Naive thymus-derived CD8-positive, alpha-beta T cell (primary cell): ENCODE measurements at regions of chr18 and their contacts with region 1.

Region 1: GRCh38 chr18:75216212-75216910 is 5.8 kb downstream of the TSHZ1 start:
- DNase-seq: peak in 5 of 10 donors; percentile 32 to 73 (median 61)
- ATAC-seq: peak; percentile 57 to 79
- H3K4me3 Mint-ChIP-seq: peak overlapping the region; percentile 44 to 72 (median 66)
- H3K27ac Mint-ChIP-seq: peak overlapping the region; percentile 74 to 98 (median 94)
- H3K4me1 Mint-ChIP-seq: peaks cover 46 to 89% (median 84%) of the 10 kb centered on the region in 4 donors
- H3K27me3 Mint-ChIP-seq: no peaks in the 10 kb centered on the region

Region 2: GRCh38 chr18:75074196-75075015 is 142.0 kb before region 1 on chr18:
- POLR2A ChIA-PET with region 1: no interaction called
- DNase-seq: peak in 1 of 10 donors; percentile 48
- ATAC-seq: no peak
- H3K4me3 Mint-ChIP-seq: peak overlapping the region in 4 of 10 donors; percentile 16 to 42 (median 31)
- H3K27ac Mint-ChIP-seq: peak overlapping the region in 7 of 10 donors; percentile 7 to 58 (median 47)
- H3K4me1 Mint-ChIP-seq: peaks cover 21 to 31% (median 30%) of the 10 kb centered on the region in 4 donors
- H3K27me3 Mint-ChIP-seq: no peaks in the 10 kb centered on the region

Region 3: DNA sequence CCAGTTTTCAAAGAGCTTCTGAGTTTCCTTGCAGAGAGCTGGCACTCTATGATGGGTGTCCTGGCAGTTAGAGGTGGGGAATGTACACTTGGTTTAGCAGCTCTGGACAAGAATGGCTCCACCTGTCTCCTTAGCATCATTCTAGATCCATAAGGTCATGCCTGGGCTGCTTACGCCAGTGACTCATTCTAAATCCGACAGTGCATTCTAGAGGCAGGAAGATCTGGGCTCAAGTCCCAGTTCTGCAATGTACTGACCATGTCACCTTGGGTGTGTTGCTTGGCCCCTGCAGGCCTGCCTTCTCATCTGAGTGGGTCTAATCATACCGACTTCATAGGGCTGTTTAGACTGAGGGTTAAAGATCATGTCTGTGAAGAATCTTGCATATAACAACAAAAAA is 53.9 kb before region 1 on chr18:
- POLR2A ChIA-PET with region 1: no interaction called
- DNase-seq: peak in 1 of 10 donors; percentile 16
- ATAC-seq: no peak
- H3K4me3 Mint-ChIP-seq: peak overlapping the region in 8 of 10 donors; percentile 35 to 94 (median 70)
- H3K27ac Mint-ChIP-seq: peak overlapping the region in 4 of 10 donors; percentile 26 to 95 (median 64)
- H3K4me1 Mint-ChIP-seq: peaks cover 4 to 16% (median 14%) of the 10 kb centered on the region in 4 donors
- H3K27me3 Mint-ChIP-seq: peaks cover 0 to 9% (median 1%) of the 10 kb centered on the region in 5 donors

Region 4: GRCh38 chr18:75247611-75248421 is 31.5 kb after region 1 on chr18:
- POLR2A ChIA-PET with region 1: interaction called, 93 read pairs
- DNase-seq: peak in 3 of 10 donors; percentile 52 to 58 (median 55)
- ATAC-seq: peak; percentile 54 to 64
- H3K4me3 Mint-ChIP-seq: peak overlapping the region; percentile 80 to 93 (median 89)
- H3K27ac Mint-ChIP-seq: peak overlapping the region; percentile 89 to 98 (median 95)
- H3K4me1 Mint-ChIP-seq: peaks cover 36 to 85% (median 80%) of the 10 kb centered on the region in 4 donors
- H3K27me3 Mint-ChIP-seq: no peaks in the 10 kb centered on the region